H1 (cell line): ENCODE measurements at regions of chr15 and their contacts with region 1.

Region 1: DNA sequence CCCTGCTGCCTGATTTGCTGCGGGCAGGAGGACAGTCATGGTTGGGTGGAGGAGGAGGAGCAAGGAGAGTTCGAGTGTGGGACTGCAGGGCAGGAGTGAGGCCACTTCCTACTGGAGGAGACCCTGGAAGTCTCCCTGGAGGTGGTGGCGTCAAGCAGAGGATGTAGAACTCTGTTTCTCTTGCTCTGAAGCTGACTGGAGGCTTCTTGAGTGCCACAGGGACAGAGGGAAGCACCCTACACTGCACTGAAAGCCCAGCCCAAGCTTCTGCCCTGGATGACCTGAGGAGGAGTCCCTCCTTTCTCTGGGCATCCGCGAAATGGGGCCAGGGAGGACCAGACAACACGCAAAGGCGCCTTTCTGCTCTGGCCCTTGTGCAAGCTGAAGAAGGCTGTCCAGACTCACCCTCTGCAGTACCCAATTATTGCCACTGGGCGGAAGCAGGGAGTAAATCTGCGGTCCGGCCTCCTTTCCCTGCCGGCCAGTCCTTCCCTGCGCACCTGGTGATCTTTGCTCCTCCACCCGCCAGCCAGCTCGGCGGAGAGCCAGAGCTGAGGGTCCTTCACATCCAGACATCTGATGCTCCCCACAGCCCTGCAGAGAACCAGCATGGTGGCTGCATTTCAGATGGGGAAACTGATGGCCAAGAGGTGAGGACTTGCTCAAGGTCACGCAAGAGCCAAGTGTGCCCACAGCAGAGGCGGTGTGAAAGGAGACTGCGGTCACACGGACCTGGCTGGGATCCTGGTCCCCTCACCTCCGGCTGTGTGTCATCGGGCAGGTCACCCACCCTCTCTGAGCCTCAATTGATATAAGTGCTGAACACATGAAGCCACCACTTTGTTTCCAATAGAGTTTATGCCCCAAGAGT is 207.1 kb downstream of the TBC1D2B start:
- DNase-seq: peak; percentile 39 to 95
- H3K4me3 ChIP-seq: no peak overlapping the region; a peak in 1 of 8 replicates
- H3K27ac ChIP-seq: no peak overlapping the region
- H3K4me1 ChIP-seq: no peaks in the 10 kb centered on the region
- H3K27me3 ChIP-seq: 0 out of 7 replicates have a peak, but pooled peaks cover 0 to 2% (median 0%) of the 10 kb centered on the region in 4 experiments
- CTCF ChIP-seq: peak; percentile 78 to 93 (median 90)
- EP300 ChIP-seq: no peak
- POLR2A ChIP-seq: no peak
- RAD21 ChIP-seq: peak; percentile 57 to 64

Region 2: GRCh38 chr15:77768107-77768506 is 102.3 kb before region 1 on chr15:
- CTCF ChIA-PET with region 1: no interaction called
- POLR2A ChIA-PET with region 1: no interaction called
- DNase-seq: no peak
- H3K4me3 ChIP-seq: no peak overlapping the region
- H3K27ac ChIP-seq: no peak overlapping the region
- H3K4me1 ChIP-seq: peaks cover 3 to 8% (median 4%) of the 10 kb centered on the region in 4 experiments
- H3K27me3 ChIP-seq: no peaks in the 10 kb centered on the region
- CTCF ChIP-seq: peak; percentile 28 to 38 (median 34); a peak in 3 of 4 replicates
- EP300 ChIP-seq: no peak
- POLR2A ChIP-seq: no peak
- RAD21 ChIP-seq: peak in 1 of 2 experiments; percentile 35; a peak in 2 of 4 replicates

Region 3: GRCh38 chr15:77840991-77841775 is 29.2 kb before region 1 on chr15:
- CTCF ChIA-PET with region 1: interaction called, 10 read pairs
- POLR2A ChIA-PET with region 1: no interaction called
- DNase-seq: no peak
- H3K4me3 ChIP-seq: no peak overlapping the region
- H3K27ac ChIP-seq: no peak overlapping the region
- H3K4me1 ChIP-seq: peaks cover 0 to 7% (median 4%) of the 10 kb centered on the region in 4 experiments; a peak in 2 of 7 replicates
- H3K27me3 ChIP-seq: no peaks in the 10 kb centered on the region
- CTCF ChIP-seq: no peak
- EP300 ChIP-seq: no peak
- POLR2A ChIP-seq: no peak
- RAD21 ChIP-seq: no peak

Region 4: DNA sequence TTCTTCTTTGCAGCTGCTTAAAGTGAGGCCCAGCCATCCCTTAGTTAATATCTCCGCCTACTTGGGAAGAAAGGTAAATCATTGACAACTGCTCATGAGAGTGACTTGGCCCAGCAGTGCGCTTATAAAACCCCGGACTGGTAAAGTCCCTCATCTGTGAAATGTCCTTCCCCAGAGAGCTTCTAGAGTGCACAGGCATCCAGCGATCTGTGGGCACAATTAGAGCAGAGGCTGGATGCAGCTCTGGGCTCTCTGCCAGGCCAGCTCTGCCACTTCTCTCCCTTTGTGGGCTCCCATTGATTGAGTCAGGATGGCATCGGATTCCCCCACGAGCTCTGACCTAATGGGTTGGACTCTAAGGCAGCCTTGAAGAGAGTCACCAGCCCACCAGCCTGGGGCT is 18.7 kb before region 1 on chr15:
- CTCF ChIA-PET with region 1: interaction called, 12 read pairs
- POLR2A ChIA-PET with region 1: no interaction called
- DNase-seq: no peak
- H3K4me3 ChIP-seq: no peak overlapping the region
- H3K27ac ChIP-seq: no peak overlapping the region
- H3K4me1 ChIP-seq: no peaks in the 10 kb centered on the region
- H3K27me3 ChIP-seq: peaks cover 0 to 3% (median 0%) of the 10 kb centered on the region in 4 experiments; a peak in 2 of 7 replicates
- CTCF ChIP-seq: no peak
- EP300 ChIP-seq: no peak
- POLR2A ChIP-seq: no peak
- RAD21 ChIP-seq: no peak

Region 5: GRCh38 chr15:77921664-77922063 is 51.2 kb after region 1 on chr15:
- CTCF ChIA-PET with region 1: no interaction called
- POLR2A ChIA-PET with region 1: no interaction called
- DNase-seq: no peak
- H3K4me3 ChIP-seq: no peak overlapping the region
- H3K27ac ChIP-seq: no peak overlapping the region
- H3K4me1 ChIP-seq: no peaks in the 10 kb centered on the region
- H3K27me3 ChIP-seq: no peaks in the 10 kb centered on the region
- CTCF ChIP-seq: no peak
- EP300 ChIP-seq: no peak
- POLR2A ChIP-seq: no peak
- RAD21 ChIP-seq: no peak